ENCODE measurements at regions of chr1 and their contacts with region 1.

Region 1: GRCh38 chr1:168567007-168567406 is 9.4 kb upstream of the XCL1 start:
- DNase-seq: no peak
- H3K4me3 ChIP-seq: no peak overlapping the region
- H3K27ac ChIP-seq: no peak overlapping the region
- H3K4me1 ChIP-seq: no peaks in the 10 kb centered on the region
- H3K27me3 ChIP-seq: no peaks in the 10 kb centered on the region
- CTCF ChIP-seq: no peak
- POLR2A ChIP-seq: no peak

Region 2: GRCh38 chr1:168065506-168065905 is 501.5 kb before region 1 on chr1:
- intact Hi-C with region 1: no loop called
- DNase-seq: no peak
- H3K4me3 ChIP-seq: no peak overlapping the region
- H3K27ac ChIP-seq: no peak overlapping the region
- H3K4me1 ChIP-seq: no peaks in the 10 kb centered on the region
- H3K27me3 ChIP-seq: no peaks in the 10 kb centered on the region
- CTCF ChIP-seq: no peak
- POLR2A ChIP-seq: no peak

Region 3: DNA sequence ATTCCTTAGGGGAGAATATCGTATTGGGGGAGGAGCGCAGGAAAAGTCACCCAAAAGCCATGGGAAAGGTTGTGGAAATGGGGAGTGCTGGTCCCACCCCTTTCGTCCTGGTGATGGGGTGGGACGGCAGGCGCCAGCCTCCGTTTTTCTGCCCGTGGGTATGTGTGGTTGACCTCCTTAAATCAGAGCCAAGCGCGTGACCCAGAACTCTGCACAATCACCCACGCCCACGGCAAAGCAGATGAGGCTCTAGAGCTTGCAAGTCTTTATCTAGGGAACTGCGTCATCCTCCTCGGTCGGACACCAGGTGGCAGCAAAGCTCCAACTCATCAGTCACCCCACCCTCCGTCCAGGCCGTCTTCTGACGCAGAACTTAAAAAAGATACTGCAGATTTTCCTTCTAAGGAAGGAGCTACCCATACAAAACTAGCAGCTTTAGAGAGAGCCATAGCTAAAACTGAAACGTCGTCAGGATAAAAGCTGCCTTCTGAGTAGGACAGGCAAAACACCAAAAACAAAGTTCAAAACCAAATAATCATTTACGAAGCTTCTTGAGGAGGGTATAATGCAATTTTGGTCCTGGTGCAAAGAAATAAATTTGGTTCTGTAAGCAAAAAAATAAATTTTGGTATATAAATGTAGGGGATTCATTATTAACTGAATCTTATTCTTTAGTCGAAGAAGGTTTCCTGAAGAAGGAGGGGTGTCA is 224.3 kb before region 1 on chr1:
- intact Hi-C with region 1: loop called (anchors 10 kb)
- DNase-seq: peak; percentile 81 to 87
- H3K4me3 ChIP-seq: no peak overlapping the region
- H3K27ac ChIP-seq: no peak overlapping the region
- H3K4me1 ChIP-seq: no peaks in the 10 kb centered on the region
- H3K27me3 ChIP-seq: no peaks in the 10 kb centered on the region
- CTCF ChIP-seq: peak; percentile 53 to 82 (median 70)
- POLR2A ChIP-seq: no peak

Region 4: GRCh38 chr1:168373869-168374268 is 193.1 kb before region 1 on chr1:
- intact Hi-C with region 1: no loop called
- DNase-seq: no peak
- H3K4me3 ChIP-seq: no peak overlapping the region
- H3K27ac ChIP-seq: no peak overlapping the region
- H3K4me1 ChIP-seq: no peaks in the 10 kb centered on the region
- H3K27me3 ChIP-seq: no peaks in the 10 kb centered on the region
- CTCF ChIP-seq: no peak
- POLR2A ChIP-seq: no peak

Region 5: DNA sequence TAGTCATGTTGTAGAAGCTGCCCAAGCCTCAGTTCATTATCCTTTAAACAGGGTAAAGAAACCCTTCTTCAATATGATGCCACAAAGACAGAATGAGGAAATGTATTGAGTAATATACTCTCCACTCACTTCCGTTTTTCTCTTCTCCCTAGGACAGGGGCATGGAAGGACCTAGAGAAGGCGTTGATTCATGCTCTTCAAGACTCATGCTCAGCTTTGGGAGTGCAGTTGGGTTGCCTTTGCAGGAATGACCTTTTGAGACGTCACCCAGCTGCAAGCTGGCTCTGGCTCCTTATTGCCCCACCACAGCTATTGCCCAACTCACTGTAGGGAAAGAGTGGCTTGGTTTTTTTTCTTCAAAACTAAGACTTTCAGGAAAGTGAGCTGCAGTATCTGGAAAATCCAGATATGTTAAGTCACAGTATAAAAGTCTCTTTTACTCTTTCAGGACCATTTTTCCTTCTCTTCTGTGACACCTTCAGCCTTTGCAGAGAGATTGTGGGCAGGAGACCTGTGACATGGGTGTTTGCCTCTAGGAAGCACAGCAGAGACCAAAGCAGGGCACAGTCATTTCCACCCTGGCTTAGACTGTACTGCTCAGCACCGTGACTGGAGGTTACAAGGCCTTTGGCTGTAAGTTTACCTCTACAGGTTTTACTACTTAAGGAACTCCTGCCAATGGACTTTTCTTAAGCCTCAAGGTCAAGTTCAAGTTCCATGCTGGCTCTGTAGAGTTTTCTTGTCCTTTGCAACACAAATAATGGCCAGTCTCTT is 62.8 kb before region 1 on chr1:
- intact Hi-C with region 1: no loop called
- DNase-seq: peak in 1 of 2 donors; percentile 19
- H3K4me3 ChIP-seq: no peak overlapping the region
- H3K27ac ChIP-seq: no peak overlapping the region
- H3K4me1 ChIP-seq: no peaks in the 10 kb centered on the region
- H3K27me3 ChIP-seq: no peaks in the 10 kb centered on the region
- CTCF ChIP-seq: no peak
- POLR2A ChIP-seq: no peak

Region 6: DNA sequence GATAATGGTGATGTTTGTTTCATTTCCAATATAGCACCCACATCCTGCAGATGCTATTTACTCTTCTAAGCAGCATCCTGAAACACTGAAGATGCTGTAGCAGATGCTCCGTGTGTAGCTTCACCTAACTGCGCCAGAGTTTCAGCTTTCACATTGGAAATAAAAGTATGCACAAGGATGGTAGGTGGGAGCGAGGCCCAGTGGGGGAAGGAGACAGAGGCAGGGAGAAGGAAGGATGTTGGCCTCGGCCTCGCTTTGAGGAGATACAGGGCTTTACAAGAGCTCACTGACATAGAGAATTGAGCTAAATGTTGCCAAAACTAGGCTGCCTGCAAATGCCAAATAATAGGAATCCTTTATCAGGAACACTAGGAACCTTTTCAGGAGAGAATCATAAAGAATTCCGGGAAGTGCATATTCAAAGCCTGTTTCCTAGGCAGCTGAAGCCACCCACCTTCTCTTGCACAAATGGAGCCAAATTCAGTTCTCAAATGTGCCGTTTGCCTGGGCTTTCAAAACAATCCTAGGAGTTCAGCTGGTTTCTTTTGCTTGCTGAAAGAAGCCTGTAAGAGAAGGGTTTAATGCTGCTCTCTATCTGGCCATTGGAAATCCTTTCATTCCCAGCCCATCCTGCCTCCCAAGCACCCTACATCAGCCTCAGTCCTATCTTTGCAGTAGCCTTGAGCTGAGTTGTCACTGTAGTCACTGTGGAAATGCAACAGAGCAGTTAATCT is 404.1 kb after region 1 on chr1:
- intact Hi-C with region 1: no loop called
- DNase-seq: no peak
- H3K4me3 ChIP-seq: no peak overlapping the region
- H3K27ac ChIP-seq: peak overlapping the region; percentile 46 to 85 (median 79)
- H3K4me1 ChIP-seq: peaks cover 28 to 30% of the 10 kb centered on the region in 2 donors
- H3K27me3 ChIP-seq: no peaks in the 10 kb centered on the region
- CTCF ChIP-seq: no peak
- POLR2A ChIP-seq: no peak